CD8-positive, alpha-beta T cell (primary cell): ENCODE measurements at regions of chr20 and their contacts with region 1.

Region 1: GRCh38 chr20:33992923-33993575 is 662 bp upstream of the RALY start:
- DNase-seq: peak; percentile 98 to 100 (median 99)
- ATAC-seq: peak; percentile 84
- H3K4me3 ChIP-seq: peak overlapping the region; percentile 97 to 98
- H3K4me3 Mint-ChIP-seq: peak overlapping the region; percentile 98
- H3K27ac ChIP-seq: peak overlapping the region; percentile 86 to 94
- H3K27ac Mint-ChIP-seq: peak overlapping the region; percentile 98
- H3K4me1 ChIP-seq: peaks cover 41% of the 10 kb centered on the region
- H3K4me1 Mint-ChIP-seq: peaks cover 59% of the 10 kb centered on the region
- H3K27me3 ChIP-seq: no peaks in the 10 kb centered on the region
- H3K27me3 Mint-ChIP-seq: no peaks in the 10 kb centered on the region
- CTCF ChIP-seq: no peak

Region 2: GRCh38 chr20:32819992-32820710 is 1172.9 kb before region 1 on chr20:
- CTCF ChIA-PET with region 1: no interaction called
- POLR2A ChIA-PET with region 1: no interaction called
- intact Hi-C with region 1: loop called in 1 of 2 experiments (anchors 5 kb)
- DNase-seq: peak in 8 of 9 experiments; percentile 78 to 92 (median 86)
- ATAC-seq: peak; percentile 76
- H3K4me3 ChIP-seq: peak overlapping the region; percentile 71 to 72
- H3K4me3 Mint-ChIP-seq: peak overlapping the region; percentile 97
- H3K27ac ChIP-seq: peak overlapping the region; percentile 88 to 93
- H3K27ac Mint-ChIP-seq: peak overlapping the region; percentile 98
- H3K4me1 ChIP-seq: peaks cover 41% of the 10 kb centered on the region
- H3K4me1 Mint-ChIP-seq: peaks cover 42% of the 10 kb centered on the region
- H3K27me3 ChIP-seq: no peaks in the 10 kb centered on the region
- H3K27me3 Mint-ChIP-seq: no peaks in the 10 kb centered on the region
- CTCF ChIP-seq: no peak

Region 3: GRCh38 chr20:33666293-33667244 is 326.5 kb before region 1 on chr20 and contains the start of gene ACTL10:
- CTCF ChIA-PET with region 1: no interaction called
- POLR2A ChIA-PET with region 1: no interaction called
- intact Hi-C with region 1: loop called in 1 of 2 experiments (anchors 10 kb)
- DNase-seq: peak; percentile 53 to 90 (median 78)
- ATAC-seq: peak; percentile 47
- H3K4me3 ChIP-seq: peak within 1 kb of the TSS; percentile 73 to 86
- H3K4me3 Mint-ChIP-seq: peak within 1 kb of the TSS; percentile 96
- H3K27ac ChIP-seq: peak within 1 kb of the TSS; percentile 25 to 80
- H3K27ac Mint-ChIP-seq: peak within 1 kb of the TSS; percentile 93
- H3K4me1 ChIP-seq: peaks cover 28% of the 10 kb centered on the region
- H3K4me1 Mint-ChIP-seq: peaks cover 39% of the 10 kb centered on the region
- H3K27me3 ChIP-seq: no peaks in the 10 kb centered on the region
- H3K27me3 Mint-ChIP-seq: no peaks in the 10 kb centered on the region
- CTCF ChIP-seq: no peak
- total RNA-seq, gene ACTL10: 0.65 to 0.75 TPM

Region 4: DNA sequence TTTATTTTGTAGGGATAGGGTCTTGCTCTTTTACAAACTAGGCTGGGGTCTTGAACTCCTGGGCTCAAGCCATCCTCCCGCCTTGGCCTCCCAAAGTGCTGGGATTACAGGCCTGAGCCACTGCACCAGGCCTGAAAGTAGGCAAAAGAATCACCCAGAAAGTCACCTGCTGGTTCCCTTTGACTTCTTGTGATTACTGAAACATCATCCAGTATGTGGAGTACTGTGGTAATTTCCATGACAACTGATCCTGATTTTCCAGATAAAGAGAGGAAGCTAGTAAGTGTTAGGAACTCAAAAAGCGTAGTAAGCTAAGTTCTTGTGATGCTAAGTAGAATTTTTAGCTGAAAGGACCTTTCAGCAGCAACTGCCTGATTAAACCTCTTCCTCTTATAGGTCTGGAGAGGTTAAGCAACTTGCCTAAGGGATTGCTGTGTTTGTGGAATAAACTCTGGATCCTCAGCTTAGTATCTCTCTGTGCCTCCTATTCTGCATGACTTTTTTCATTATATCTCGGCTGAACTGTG is 17.4 kb after region 1 on chr20:
- CTCF ChIA-PET with region 1: interaction called, 5 read pairs
- POLR2A ChIA-PET with region 1: interaction called, 18 read pairs
- intact Hi-C with region 1: no loop called
- DNase-seq: no peak
- ATAC-seq: no peak
- H3K4me3 ChIP-seq: no peak overlapping the region
- H3K4me3 Mint-ChIP-seq: peak overlapping the region; percentile 17
- H3K27ac ChIP-seq: peak overlapping the region in 1 of 2 experiments; percentile 60
- H3K27ac Mint-ChIP-seq: no peak overlapping the region
- H3K4me1 ChIP-seq: peaks cover 77% of the 10 kb centered on the region
- H3K4me1 Mint-ChIP-seq: peaks cover 90% of the 10 kb centered on the region
- H3K27me3 ChIP-seq: no peaks in the 10 kb centered on the region
- H3K27me3 Mint-ChIP-seq: no peaks in the 10 kb centered on the region
- CTCF ChIP-seq: no peak

Region 5: DNA sequence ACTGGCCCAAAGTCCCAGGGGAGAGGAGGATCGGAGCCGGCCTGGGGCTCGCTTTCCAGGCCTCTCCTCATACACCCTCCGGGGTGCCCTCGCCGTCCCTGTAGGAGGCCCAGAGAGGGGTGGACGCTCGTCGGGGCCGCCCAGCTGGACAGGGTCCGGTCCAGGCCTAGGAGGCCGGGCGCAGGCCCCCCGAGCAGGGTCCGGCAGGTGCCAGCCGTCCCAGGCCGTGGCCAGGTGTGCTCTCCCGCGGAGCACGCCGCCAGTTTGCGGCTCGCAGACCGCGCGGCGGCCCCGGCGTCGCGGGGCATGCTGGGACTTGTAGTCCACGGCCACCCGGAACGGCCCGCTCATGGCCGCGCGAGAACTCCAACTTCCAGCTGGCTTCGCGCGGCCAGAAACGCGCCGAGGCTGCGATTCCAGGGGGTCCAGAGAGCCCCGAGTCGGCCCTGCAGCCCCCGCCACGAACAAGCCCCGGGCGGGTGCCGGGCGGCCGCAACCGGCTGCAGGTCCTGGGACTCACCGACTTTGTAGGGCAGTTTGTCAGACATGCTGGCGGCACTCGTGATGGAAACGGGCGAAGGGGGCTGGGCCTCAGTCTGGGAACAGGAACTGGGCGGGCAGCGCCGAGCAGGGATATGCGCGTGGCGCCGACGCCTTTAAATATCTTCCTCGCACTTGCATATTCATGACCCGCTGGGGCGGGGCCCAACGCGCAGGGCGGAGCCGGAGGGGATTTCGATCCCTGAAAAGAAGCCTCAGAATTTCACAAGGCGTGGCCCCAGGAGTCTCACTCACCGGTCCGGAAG is 309.9 kb after region 1 on chr20 and contains the start of gene AHCY:
- CTCF ChIA-PET with region 1: no interaction called
- POLR2A ChIA-PET with region 1: no interaction called
- intact Hi-C with region 1: loop called in 1 of 2 experiments (anchors 5 kb)
- DNase-seq: peak; percentile 76 to 96 (median 91)
- ATAC-seq: peak; percentile 94
- H3K4me3 ChIP-seq: peak within 1 kb of the TSS; percentile 69 to 92
- H3K4me3 Mint-ChIP-seq: peak within 1 kb of the TSS; percentile 96
- H3K27ac ChIP-seq: peak within 1 kb of the TSS; percentile 67 to 86
- H3K27ac Mint-ChIP-seq: peak within 1 kb of the TSS; percentile 94
- H3K4me1 ChIP-seq: no peaks in the 10 kb centered on the region
- H3K4me1 Mint-ChIP-seq: peaks cover 17% of the 10 kb centered on the region
- H3K27me3 ChIP-seq: no peaks in the 10 kb centered on the region
- H3K27me3 Mint-ChIP-seq: no peaks in the 10 kb centered on the region
- CTCF ChIP-seq: no peak
- total RNA-seq, gene AHCY: 16.1 to 17.8 TPM

Region 6: GRCh38 chr20:35092524-35093266 is 1099.6 kb after region 1 on chr20 and contains the start of gene TRPC4AP:
- CTCF ChIA-PET with region 1: no interaction called
- POLR2A ChIA-PET with region 1: no interaction called
- intact Hi-C with region 1: loop called in 1 of 2 experiments (anchors 10 kb)
- DNase-seq: peak; percentile 77 to 95 (median 87)
- ATAC-seq: peak; percentile 97
- H3K4me3 ChIP-seq: peak within 1 kb of the TSS; percentile 84 to 91
- H3K4me3 Mint-ChIP-seq: peak within 1 kb of the TSS; percentile 89
- H3K27ac ChIP-seq: peak within 1 kb of the TSS; percentile 72 to 74
- H3K27ac Mint-ChIP-seq: peak within 1 kb of the TSS; percentile 91
- H3K4me1 ChIP-seq: peaks cover 42% of the 10 kb centered on the region
- H3K4me1 Mint-ChIP-seq: peaks cover 49% of the 10 kb centered on the region
- H3K27me3 ChIP-seq: no peaks in the 10 kb centered on the region
- H3K27me3 Mint-ChIP-seq: no peaks in the 10 kb centered on the region
- CTCF ChIP-seq: peak; percentile 88
- total RNA-seq, gene TRPC4AP: 63.3 to 64.0 TPM